Spleen (tissue), 13 donors: ENCODE measurements at regions of chr19 and their contacts with region 1.

Region 1: GRCh38 chr19:47296036-47296435 is 13.6 kb upstream of the C5AR1 start:
- DNase-seq: peak; percentile 82
- H3K4me3 ChIP-seq: no peak overlapping the region
- H3K27ac ChIP-seq: no peak overlapping the region
- H3K4me1 ChIP-seq: peaks cover 0 to 33% (median 6%) of the 10 kb centered on the region in 6 donors
- H3K27me3 ChIP-seq: no peaks in the 10 kb centered on the region
- CTCF ChIP-seq: peak; percentile 60 to 91 (median 83)
- POLR2A ChIP-seq: no peak

Region 2: DNA sequence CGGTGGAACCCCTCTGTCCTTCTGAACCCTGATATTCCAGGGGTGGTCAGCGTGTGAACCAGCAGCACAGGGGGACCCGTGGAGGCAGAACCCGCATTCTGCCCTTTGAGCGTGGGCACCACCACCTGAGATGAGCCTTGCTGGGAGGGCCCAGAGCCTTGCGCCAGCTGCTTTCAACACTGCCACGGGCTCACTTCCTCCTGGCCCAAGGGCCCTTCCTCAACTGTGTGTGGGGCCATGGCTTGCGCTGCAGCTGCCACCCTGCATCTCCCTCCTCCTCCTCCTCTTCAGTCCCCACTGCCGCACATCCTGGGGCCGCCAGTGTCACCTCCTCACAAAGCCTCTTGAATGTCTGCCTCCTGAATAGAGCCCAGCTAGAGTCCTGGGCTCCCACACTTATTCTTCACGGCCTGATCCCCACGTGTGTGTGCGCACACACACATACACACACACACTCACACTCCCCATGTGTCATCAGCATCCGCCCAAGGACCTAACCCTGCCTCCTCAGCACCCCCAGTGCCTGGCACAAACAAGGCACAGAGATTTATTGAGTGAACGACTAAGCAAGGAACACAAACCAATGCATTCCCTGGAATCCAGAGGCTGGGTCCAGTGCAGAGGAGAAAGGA is 220.7 kb before region 1 on chr19:
- intact Hi-C with region 1: no loop called
- DNase-seq: peak; percentile 89
- H3K4me3 ChIP-seq: no peak overlapping the region
- H3K27ac ChIP-seq: peak overlapping the region in 3 of 8 donors; percentile 30 to 55 (median 38)
- H3K4me1 ChIP-seq: peaks cover 0 to 52% (median 23%) of the 10 kb centered on the region in 6 donors
- H3K27me3 ChIP-seq: no peaks in the 10 kb centered on the region
- CTCF ChIP-seq: no peak
- POLR2A ChIP-seq: no peak

Region 3: DNA sequence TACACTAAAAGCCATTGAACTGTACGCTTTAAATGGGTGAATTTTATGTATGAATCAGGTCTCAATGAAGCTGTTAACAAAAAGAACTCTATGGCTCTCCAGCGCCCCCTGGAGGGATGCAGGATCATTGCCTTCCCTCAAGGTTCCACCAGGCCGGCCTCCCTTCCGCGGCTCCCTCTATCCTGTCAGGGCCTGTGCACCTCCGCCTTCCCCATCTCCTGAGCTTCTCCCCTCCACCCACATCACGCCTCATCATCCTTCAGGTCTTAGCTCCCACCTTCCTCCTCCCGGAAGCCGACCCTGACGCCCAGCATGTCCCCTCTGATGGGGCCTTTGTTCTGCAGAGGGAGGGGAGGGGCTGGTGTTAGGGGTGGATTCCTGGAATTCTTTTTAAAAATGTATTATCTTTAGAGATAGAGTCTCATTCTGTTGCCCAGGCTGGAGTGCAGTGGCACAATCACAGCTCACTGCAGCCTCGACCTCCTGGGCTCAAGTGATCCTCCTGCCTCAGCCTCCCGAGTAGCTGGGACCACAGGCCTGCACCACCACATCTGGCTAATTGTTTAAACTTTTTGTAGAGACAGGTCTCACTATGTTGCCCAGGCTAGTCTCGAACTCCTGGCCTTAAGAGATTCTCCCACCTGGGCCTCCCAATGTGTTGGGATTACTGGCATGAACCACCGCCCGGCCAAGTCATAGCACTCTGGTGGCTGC is 95.6 kb after region 1 on chr19:
- intact Hi-C with region 1: loop called (anchors 5 kb)
- DNase-seq: peak; percentile 94
- H3K4me3 ChIP-seq: no peak overlapping the region
- H3K27ac ChIP-seq: peak overlapping the region in 1 of 8 donors; percentile 91
- H3K4me1 ChIP-seq: peaks cover 0 to 44% (median 9%) of the 10 kb centered on the region in 6 donors
- H3K27me3 ChIP-seq: peaks cover 0 to 5% (median 0%) of the 10 kb centered on the region in 7 donors
- CTCF ChIP-seq: peak; percentile 87 to 97 (median 93)
- POLR2A ChIP-seq: no peak

Region 4: DNA sequence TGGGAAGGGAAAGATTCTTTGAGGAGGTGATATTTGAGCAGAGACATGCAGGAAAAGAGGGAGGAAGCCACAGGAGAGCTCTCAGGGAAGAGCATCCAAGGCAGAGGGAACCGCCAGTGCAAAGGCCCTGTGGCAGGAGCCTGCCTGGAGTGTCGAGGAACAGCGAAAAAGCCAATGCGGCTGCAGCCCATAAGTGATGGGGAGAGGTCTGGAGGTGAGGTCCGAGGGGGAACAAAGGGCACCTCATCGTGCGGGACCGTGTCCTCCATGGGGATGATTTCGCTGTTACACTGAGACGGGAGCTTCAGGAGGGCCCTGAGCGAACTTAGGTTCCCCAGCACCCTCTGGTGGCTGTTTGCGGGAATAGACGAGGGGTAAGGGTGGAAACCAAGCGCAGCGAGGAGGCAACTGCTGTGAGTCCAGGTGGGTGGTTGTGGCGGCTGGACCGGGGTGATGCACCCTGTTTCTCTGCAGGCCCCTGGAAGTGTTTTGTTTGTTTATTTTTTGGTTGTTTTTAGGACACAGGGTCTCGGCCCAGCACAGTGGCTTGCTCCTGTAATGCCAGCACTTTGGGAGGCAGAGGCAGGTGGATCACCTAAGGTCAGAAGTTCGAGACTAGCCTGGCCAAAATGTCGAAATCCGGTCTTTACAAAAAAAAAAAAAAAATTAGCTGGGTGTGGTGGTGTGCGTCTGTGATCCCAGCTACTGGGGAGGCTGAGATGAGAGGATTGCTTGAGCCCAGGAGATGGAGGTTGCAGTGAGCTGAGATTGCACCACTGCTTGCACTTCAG is 411.3 kb after region 1 on chr19:
- intact Hi-C with region 1: loop called (anchors 10 kb)
- DNase-seq: peak; percentile 87
- H3K4me3 ChIP-seq: no peak overlapping the region
- H3K27ac ChIP-seq: no peak overlapping the region
- H3K4me1 ChIP-seq: peaks cover 0 to 6% (median 0%) of the 10 kb centered on the region in 6 donors
- H3K27me3 ChIP-seq: peaks cover 0 to 39% (median 0%) of the 10 kb centered on the region in 7 donors
- CTCF ChIP-seq: peak; percentile 35 to 85 (median 81)
- POLR2A ChIP-seq: no peak